Cardiac septum (tissue), 1 donor: ENCODE measurements at regions of chr2 and their contacts with region 1.

Region 1: DNA sequence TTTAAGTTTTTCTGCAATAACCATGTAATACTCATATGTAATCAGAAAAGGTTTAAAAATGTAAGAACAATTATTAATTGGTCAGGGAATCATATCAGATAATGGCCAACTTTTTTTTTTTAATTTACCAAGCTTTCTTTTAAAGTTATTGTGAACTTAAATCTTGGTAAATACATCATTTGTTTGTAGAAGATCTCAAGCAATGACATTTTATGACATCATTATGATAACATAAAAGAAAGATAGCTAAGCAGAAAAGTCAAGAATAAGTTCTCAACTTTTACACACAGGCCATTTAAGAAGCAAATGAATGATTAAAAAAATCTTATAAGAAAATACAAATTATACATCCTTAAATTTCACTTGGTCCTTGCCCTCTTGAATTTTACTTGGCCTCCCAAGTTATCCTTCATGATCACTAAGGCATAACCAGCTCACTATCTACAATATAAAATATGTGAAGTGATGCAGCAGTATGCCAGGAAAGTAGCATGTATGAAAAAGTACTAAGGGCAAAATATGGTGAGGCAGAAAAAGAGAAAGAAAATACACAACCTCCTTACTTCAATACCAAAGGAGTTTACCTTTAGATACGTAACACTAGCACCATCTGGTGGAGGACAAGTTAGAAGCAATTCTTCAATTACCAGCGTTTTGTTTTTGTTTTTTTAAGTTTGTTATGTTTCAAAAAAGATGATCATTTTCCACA is 116.6 kb downstream of the SRBD1 start:
- DNase-seq: no peak

Region 2: DNA sequence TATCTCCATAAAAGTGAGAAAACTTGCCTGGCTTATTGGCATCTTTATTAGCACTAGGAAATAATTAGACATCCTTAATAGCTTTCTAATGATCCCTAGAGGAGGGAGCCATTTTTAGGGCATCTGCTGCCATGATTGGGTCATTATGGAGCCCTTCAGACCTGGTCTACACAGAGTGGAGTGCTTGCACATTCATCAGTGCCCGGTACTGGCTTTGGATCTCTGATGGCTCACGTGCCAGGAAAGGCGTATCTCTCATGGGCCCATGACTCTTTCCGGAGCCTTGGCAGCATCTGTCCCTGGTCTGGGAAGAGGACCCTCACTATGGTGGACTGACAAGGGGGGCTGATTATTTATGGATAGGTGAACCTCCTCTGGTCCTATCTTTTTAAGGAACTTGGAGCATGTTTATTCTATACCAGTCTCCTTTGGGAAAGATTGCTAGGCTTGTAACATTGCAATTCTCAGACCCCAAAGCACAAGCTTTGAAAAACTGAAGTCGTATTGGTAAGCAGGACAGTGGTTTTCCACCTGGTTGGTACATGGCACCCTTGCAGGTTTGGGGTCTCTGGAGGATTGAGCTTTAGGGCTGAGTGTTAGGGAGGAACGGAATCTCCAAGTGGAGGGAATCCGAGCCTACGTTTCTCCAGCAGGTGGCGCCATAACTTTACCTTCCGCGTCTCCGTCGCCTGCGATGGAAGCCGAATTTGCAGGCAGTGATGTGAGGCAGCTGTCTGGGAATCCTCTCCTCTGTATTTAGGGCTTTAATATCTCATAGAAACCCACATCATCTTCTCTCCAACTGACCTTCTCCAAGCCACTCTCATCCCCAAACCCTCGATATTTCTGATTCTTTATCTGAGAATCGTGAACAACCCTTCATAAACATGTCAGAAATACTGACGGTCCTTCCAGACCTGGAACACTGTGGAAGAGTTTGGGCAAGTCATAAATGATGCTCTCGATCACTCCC is 513.0 kb before region 1 on chr2:
- intact Hi-C with region 1: loop called (anchors 2 kb)
- DNase-seq: peak; percentile 88